ENCODE measurements at regions of chr14 and their contacts with region 1.

Region 1: DNA sequence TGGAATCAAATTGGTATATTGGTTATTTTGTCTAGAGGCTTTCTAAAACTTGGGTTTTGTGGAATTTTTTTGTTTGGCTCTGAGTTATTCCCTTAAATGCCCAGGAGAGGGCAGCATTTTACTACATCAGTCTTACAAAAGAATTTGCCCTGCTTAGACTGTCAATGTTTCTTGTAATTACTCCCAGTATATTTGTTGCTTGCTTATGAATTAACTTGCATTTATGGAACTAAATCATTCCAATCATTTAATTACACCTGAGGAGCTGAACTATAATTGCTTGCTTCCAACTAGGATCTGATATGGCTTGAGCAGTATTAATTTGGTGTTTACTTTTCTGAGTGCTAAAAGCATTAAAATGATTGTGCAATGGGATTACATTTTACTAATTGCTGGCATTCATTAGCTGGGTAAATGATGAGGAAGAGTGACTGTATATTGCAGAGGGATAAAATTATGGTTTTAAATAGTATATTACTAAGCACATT is 48.7 kb downstream of the MIPOL1 start:
- DNase-seq: no peak
- H3K4me3 ChIP-seq: no peak overlapping the region
- H3K27ac ChIP-seq: no peak overlapping the region
- H3K4me1 ChIP-seq: no peaks in the 10 kb centered on the region
- H3K27me3 ChIP-seq: no peaks in the 10 kb centered on the region
- CTCF ChIP-seq: peak; percentile 54 to 79

Region 2: DNA sequence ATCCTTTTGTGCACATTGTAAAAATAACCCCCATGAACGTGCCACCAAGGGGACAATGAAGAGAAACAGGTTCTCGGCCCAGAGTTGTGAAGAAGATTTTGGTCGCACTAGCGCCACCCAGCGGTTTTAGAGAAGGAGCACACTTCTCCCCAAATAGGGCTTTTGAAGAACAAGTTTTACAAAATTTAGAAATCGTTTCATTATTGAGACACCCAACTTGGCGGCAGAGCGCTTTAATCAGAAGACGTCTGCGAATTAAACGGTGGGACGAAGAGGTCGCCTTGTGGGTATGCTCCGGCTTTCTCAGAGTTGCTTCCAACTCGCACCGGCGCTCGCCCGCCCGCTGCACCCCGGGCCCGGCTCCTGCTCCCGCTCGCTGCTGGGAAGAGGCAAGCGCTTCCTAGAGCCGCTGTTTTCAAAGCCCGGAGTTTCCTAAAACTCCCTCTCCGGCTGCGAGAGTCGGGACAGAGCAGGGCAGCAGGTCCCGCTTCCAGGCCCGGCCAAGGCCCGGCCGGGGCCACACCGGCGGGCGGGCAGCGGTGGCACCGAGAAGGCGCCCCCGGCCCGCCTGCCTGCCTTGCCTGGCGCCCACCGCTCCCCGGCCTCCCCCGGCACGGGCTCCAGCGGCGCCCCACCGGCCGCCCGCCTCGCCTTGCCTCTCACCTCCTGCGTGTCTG is 347.9 kb after region 1 on chr14:
- intact Hi-C with region 1: loop called (anchors 10 kb)
- DNase-seq: no peak
- H3K4me3 ChIP-seq: peak overlapping the region; percentile 43 to 52
- H3K27ac ChIP-seq: no peak overlapping the region
- H3K4me1 ChIP-seq: peaks cover 0 to 43% (median 36%) of the 10 kb centered on the region in 4 donors
- H3K27me3 ChIP-seq: peaks cover 25 to 97% of the 10 kb centered on the region in 2 donors
- CTCF ChIP-seq: peak in 1 of 2 experiments; percentile 62

Measured in tibial artery (tissue), 4 donors.